ENCODE measurements at regions of chr5 and their contacts with region 1.

Region 1: DNA sequence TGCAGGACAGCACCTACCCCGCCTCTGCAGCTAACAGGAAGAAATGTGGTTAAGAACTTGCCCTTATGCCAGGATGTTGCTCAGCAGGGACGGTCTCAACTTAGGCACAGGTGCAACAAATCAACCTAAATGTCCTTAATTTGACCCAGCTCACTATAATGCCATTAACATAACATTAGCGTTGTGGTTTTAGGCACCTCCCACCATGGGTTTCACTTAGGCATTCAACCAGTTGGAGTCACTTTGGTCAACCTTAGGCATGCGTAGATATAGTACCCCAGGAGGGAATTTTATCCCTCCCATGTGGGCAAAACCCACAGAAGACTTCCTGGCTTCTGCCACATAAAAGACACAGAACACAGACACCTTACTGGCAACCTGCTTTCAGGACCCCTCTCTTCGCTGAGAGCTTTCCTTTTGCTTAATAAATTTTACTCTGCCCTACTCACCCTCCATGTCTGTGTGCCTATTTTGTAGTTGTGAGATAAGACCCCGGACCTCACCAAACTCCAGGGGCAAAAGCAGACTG is 8.7 kb upstream of the ERAP1 start:
- DNase-seq: peak in 8 of 9 donors; percentile 37 to 85 (median 76)
- ATAC-seq: peak; percentile 91
- H3K4me3 ChIP-seq: peak overlapping the region; percentile 64
- H3K4me3 Mint-ChIP-seq: peak overlapping the region; percentile 65 to 93 (median 82)
- H3K27ac ChIP-seq: peak overlapping the region; percentile 70
- H3K27ac Mint-ChIP-seq: peak overlapping the region; percentile 74 to 100 (median 94)
- H3K4me1 ChIP-seq: peaks cover 29 to 59% of the 10 kb centered on the region in 2 donors
- H3K4me1 Mint-ChIP-seq: peaks cover 51 to 95% (median 89%) of the 10 kb centered on the region in 7 donors
- H3K27me3 ChIP-seq: no peaks in the 10 kb centered on the region
- H3K27me3 Mint-ChIP-seq: no peaks in the 10 kb centered on the region

Region 2: DNA sequence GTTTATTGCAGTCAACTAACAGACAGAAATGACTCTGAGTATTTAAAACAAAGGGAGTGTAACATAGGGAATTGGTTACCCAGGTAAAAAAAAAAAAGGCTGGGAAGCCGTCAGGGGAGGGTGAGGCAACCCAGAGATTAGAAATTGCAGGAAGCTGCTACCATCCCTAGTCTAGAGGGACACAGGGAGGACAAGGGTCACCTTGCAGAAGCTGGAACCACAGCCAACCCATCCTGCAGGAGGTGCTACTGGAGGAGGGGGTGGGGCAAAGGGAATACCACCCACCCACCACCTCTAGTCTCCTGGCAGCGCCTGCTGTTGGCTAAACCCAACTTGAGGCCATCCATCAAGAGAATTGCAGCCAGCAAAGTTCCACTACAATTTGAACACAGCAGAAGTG is 147.8 kb before region 1 on chr5:
- CTCF ChIA-PET with region 1: no interaction called
- POLR2A ChIA-PET with region 1: no interaction called
- intact Hi-C with region 1: no loop called
- DNase-seq: no peak
- ATAC-seq: no peak
- H3K4me3 ChIP-seq: no peak overlapping the region
- H3K4me3 Mint-ChIP-seq: no peak overlapping the region
- H3K27ac ChIP-seq: no peak overlapping the region
- H3K27ac Mint-ChIP-seq: no peak overlapping the region
- H3K4me1 ChIP-seq: peaks cover 14 to 17% of the 10 kb centered on the region in 2 donors
- H3K4me1 Mint-ChIP-seq: peaks cover 40 to 69% (median 55%) of the 10 kb centered on the region in 7 donors
- H3K27me3 ChIP-seq: no peaks in the 10 kb centered on the region
- H3K27me3 Mint-ChIP-seq: no peaks in the 10 kb centered on the region

Region 3: DNA sequence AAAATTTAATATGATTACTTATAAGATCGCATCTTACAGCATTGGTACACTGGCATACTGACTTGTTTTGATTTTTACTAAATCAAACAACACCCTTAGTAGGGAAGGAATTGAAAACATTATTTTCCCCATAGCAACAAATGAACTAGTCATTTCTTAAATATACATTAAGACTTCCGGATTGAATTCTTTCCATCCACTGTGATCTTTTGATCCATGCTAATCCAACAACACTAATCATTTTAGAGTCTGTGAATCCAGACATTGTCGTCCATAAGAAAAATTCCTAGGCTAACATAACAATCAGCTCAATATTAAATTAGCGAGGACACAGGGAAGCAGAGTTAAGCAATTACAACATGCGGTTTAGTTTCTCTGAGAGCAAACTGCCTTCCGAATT is 12.8 kb after region 1 on chr5:
- CTCF ChIA-PET with region 1: no interaction called
- POLR2A ChIA-PET with region 1: interaction called, 13 read pairs
- intact Hi-C with region 1: loop called in 1 of 2 experiments (anchors 2 kb)
- DNase-seq: no peak
- ATAC-seq: no peak
- H3K4me3 ChIP-seq: no peak overlapping the region
- H3K4me3 Mint-ChIP-seq: no peak overlapping the region
- H3K27ac ChIP-seq: no peak overlapping the region
- H3K27ac Mint-ChIP-seq: no peak overlapping the region
- H3K4me1 ChIP-seq: no peaks in the 10 kb centered on the region
- H3K4me1 Mint-ChIP-seq: peaks cover 0 to 10% (median 4%) of the 10 kb centered on the region in 7 donors
- H3K27me3 ChIP-seq: no peaks in the 10 kb centered on the region
- H3K27me3 Mint-ChIP-seq: peaks cover 0 to 34% (median 0%) of the 10 kb centered on the region in 5 donors

Region 4: GRCh38 chr5:96876292-96876850 is 59.9 kb after region 1 on chr5 and contains the start of gene ERAP2:
- CTCF ChIA-PET with region 1: no interaction called
- POLR2A ChIA-PET with region 1: interaction called, 12 read pairs
- intact Hi-C with region 1: loop called (anchors 1 kb)
- DNase-seq: peak in 7 of 9 donors; percentile 53 to 73 (median 64)
- ATAC-seq: peak; percentile 79
- H3K4me3 ChIP-seq: peak within 1 kb of the TSS; percentile 85
- H3K4me3 Mint-ChIP-seq: peak within 1 kb of the TSS; percentile 81 to 99 (median 96)
- H3K27ac ChIP-seq: peak within 1 kb of the TSS; percentile 80
- H3K27ac Mint-ChIP-seq: peak within 1 kb of the TSS; percentile 91 to 99 (median 97)
- H3K4me1 ChIP-seq: peaks cover 26 to 56% of the 10 kb centered on the region in 2 donors
- H3K4me1 Mint-ChIP-seq: peaks cover 44 to 76% (median 73%) of the 10 kb centered on the region in 7 donors
- H3K27me3 ChIP-seq: no peaks in the 10 kb centered on the region
- H3K27me3 Mint-ChIP-seq: no peaks in the 10 kb centered on the region
- total RNA-seq, gene ERAP2: 42.5 to 158 (median 97.2) TPM

Measured in naive thymus-derived CD4-positive, alpha-beta T cell (primary cell).